ENCODE measurements at regions of chr2 and their contacts with region 1.

Region 1: GRCh38 chr2:157628477-157629415 is at the start of gene ACVR1C:
- DNase-seq: peak; percentile 71
- H3K4me3 Mint-ChIP-seq: peak within 1 kb of the TSS; percentile 87
- H3K27ac Mint-ChIP-seq: peak within 1 kb of the TSS; percentile 24
- H3K4me1 Mint-ChIP-seq: peaks cover 29% of the 10 kb centered on the region
- H3K27me3 Mint-ChIP-seq: peaks cover 10% of the 10 kb centered on the region
- total RNA-seq, gene ACVR1C: 1.6 to 1.9 TPM

Region 2: DNA sequence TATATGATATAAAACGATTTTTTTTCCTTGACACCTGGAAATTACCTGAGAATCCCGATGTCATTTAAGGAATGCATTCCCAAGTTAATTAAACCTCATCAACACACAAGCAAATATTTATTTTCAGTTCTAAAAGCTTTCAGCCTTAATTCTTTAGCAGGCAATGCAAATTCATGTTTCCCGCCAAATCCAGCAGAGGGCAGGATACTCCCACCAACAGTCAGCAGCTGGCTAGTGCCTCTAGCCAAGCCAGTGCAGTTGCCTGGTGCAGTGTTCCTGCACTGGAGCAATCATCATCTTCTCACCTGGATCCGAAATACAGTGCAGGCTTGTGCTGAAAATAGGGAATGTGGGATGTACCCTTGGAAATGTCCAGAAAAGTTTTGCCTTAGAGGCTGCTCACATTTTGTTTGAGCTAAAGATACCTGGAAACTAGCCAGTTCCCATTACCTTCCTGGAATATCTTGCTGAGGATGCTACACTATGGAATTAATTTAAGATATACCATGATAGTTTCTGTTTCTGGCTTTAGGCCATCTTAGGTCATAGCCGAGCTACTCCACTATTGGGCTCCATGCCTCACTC is 136.5 kb before region 1 on chr2:
- CTCF ChIA-PET with region 1: interaction called, 19 read pairs
- POLR2A ChIA-PET with region 1: no interaction called
- DNase-seq: peak; percentile 79
- H3K4me3 Mint-ChIP-seq: no peak overlapping the region
- H3K27ac Mint-ChIP-seq: no peak overlapping the region
- H3K4me1 Mint-ChIP-seq: peaks cover 66% of the 10 kb centered on the region
- H3K27me3 Mint-ChIP-seq: no peaks in the 10 kb centered on the region

Region 3: GRCh38 chr2:157596992-157597681 is 31.6 kb before region 1 on chr2:
- CTCF ChIA-PET with region 1: interaction called, 15 read pairs
- POLR2A ChIA-PET with region 1: no interaction called
- DNase-seq: peak; percentile 58
- H3K4me3 Mint-ChIP-seq: peak overlapping the region; percentile 46
- H3K27ac Mint-ChIP-seq: no peak overlapping the region
- H3K4me1 Mint-ChIP-seq: peaks cover 8% of the 10 kb centered on the region
- H3K27me3 Mint-ChIP-seq: peaks cover 11% of the 10 kb centered on the region

Region 4: GRCh38 chr2:157743051-157743450 is 114.3 kb after region 1 on chr2:
- CTCF ChIA-PET with region 1: no interaction called
- POLR2A ChIA-PET with region 1: no interaction called
- DNase-seq: no peak
- H3K4me3 Mint-ChIP-seq: no peak overlapping the region
- H3K27ac Mint-ChIP-seq: no peak overlapping the region
- H3K4me1 Mint-ChIP-seq: peaks cover 31% of the 10 kb centered on the region
- H3K27me3 Mint-ChIP-seq: no peaks in the 10 kb centered on the region

Region 5: DNA sequence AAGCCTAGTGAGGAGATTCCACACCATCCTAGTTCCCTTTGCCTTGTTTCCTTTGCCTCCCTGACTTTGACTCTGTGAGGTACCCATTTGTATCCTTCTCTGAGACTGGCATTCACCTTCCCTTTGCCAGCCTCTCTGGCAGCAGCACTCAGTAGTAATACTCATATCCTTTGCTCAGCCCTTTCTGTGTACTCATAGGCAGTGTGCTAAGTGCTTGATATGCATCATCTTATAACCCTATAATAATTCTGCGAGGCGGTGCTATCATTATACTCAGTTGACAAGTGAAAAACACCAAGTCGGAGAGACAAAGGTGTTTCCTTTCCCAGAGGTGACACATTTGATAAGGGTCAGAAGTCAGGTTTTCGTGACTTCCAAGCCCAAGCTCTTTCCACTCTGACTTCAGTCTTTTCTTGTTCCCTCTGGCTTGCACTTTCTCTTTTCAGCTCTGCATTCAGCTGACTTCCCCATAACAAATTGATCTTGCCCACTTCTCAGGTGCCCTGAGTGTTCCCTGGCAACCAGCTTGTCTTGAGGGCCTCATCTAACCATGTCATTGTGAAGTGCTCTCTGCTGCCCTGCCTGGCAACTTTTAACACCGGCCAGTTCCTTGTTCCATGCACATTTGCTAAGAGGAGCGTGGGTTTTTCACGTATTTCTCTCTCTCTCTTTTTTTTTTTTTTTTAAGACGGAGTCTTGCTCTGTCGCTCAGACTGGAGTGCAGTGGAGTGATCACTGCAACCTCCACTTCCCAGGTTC is 378.4 kb after region 1 on chr2:
- CTCF ChIA-PET with region 1: interaction called, 11 read pairs
- POLR2A ChIA-PET with region 1: no interaction called
- DNase-seq: no peak
- H3K4me3 Mint-ChIP-seq: no peak overlapping the region
- H3K27ac Mint-ChIP-seq: no peak overlapping the region
- H3K4me1 Mint-ChIP-seq: peaks cover 15% of the 10 kb centered on the region
- H3K27me3 Mint-ChIP-seq: peaks cover 1% of the 10 kb centered on the region